CD14-positive monocyte (primary cell): ENCODE measurements at regions of chr2 and their contacts with region 1.

Region 1: GRCh38 chr2:99818842-99819241 is 323.5 kb downstream of the AFF3 start:
- DNase-seq: no peak
- H3K4me3 ChIP-seq: no peak overlapping the region
- H3K4me3 Mint-ChIP-seq: no peak overlapping the region
- H3K27ac ChIP-seq: no peak overlapping the region
- H3K27ac Mint-ChIP-seq: no peak overlapping the region
- H3K4me1 ChIP-seq: peaks cover 0 to 5% of the 10 kb centered on the region in 2 donors
- H3K4me1 Mint-ChIP-seq: peaks cover 16% of the 10 kb centered on the region
- H3K27me3 ChIP-seq: no peaks in the 10 kb centered on the region
- H3K27me3 Mint-ChIP-seq: no peaks in the 10 kb centered on the region
- CTCF ChIP-seq: no peak

Region 2: GRCh38 chr2:99644419-99644787 is 174.4 kb before region 1 on chr2:
- intact Hi-C with region 1: no loop called
- DNase-seq: no peak
- H3K4me3 ChIP-seq: no peak overlapping the region
- H3K4me3 Mint-ChIP-seq: no peak overlapping the region
- H3K27ac ChIP-seq: no peak overlapping the region
- H3K27ac Mint-ChIP-seq: no peak overlapping the region
- H3K4me1 ChIP-seq: no peaks in the 10 kb centered on the region
- H3K4me1 Mint-ChIP-seq: peaks cover 8% of the 10 kb centered on the region
- H3K27me3 ChIP-seq: no peaks in the 10 kb centered on the region
- H3K27me3 Mint-ChIP-seq: no peaks in the 10 kb centered on the region
- CTCF ChIP-seq: no peak

Region 3: DNA sequence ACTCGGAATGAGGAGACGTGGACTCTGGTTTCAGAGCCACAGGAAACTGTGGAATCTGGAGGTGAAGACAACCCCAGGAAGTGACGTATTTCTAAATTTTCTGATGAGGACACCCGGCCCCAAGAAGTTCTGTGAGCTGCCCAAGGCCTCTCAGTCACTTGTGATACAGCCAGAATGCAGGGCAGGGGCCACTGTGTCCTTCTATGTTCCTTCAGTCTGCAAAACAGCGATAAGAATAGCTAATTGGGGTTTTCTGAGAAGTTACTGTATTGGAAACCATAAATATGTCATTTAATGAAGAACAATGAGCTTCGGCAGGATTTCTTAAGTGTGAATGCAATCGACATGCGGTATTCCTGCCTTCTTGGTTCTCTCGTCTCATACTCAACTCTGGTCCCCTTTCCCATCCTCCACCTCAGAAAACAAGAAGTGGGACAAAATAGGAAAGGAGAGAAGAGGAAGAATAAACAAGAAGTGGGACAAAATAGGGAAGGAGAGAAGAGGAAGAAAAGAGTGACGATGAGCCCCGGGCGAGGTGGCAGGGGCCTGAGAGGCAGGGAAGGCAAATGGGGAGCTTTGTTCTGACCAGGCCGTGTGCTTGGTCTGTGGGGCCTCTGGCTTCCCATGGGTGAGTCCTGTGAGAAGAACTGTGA is 47.0 kb before region 1 on chr2:
- intact Hi-C with region 1: loop called in 1 of 2 experiments (anchors 5 kb)
- DNase-seq: peak; percentile 69 to 86 (median 84)
- H3K4me3 ChIP-seq: peak overlapping the region in 1 of 3 experiments; percentile 50
- H3K4me3 Mint-ChIP-seq: peak overlapping the region; percentile 42 to 69
- H3K27ac ChIP-seq: peak overlapping the region; percentile 83 to 92
- H3K27ac Mint-ChIP-seq: peak overlapping the region; percentile 95 to 98 (median 96)
- H3K4me1 ChIP-seq: peaks cover 81 to 88% of the 10 kb centered on the region in 2 donors
- H3K4me1 Mint-ChIP-seq: peaks cover 93% of the 10 kb centered on the region
- H3K27me3 ChIP-seq: no peaks in the 10 kb centered on the region
- H3K27me3 Mint-ChIP-seq: no peaks in the 10 kb centered on the region
- CTCF ChIP-seq: no peak

Region 4: DNA sequence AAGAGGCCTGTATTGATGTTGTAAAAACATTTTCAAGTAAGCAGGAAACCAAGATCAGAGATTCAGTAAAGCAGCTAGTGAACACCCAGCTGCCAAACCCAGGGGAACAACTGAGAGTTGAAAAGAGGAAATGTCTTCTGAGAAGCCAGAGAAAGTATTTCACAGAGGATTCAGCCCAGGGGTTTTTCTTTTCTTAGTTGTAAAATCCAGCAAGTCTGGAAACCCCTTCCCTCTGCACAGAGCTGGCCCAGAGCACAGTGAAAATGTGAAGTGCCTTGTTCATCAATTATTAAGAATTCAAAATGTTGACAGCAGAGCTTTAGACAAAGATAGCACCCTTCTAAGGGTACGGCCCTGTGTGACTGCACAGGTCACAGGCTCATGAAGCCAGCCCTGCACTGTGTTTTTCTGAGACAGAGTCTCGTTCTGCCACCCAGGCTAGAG is 295.2 kb after region 1 on chr2:
- intact Hi-C with region 1: no loop called
- DNase-seq: peak in 2 of 3 donors; percentile 8 to 23
- H3K4me3 ChIP-seq: no peak overlapping the region
- H3K4me3 Mint-ChIP-seq: peak overlapping the region in 1 of 2 donors; percentile 63
- H3K27ac ChIP-seq: peak overlapping the region; percentile 7 to 39
- H3K27ac Mint-ChIP-seq: peak overlapping the region in 3 of 7 donors; percentile 23 to 76 (median 69)
- H3K4me1 ChIP-seq: peaks cover 21 to 27% of the 10 kb centered on the region in 2 donors
- H3K4me1 Mint-ChIP-seq: peaks cover 35% of the 10 kb centered on the region
- H3K27me3 ChIP-seq: no peaks in the 10 kb centered on the region
- H3K27me3 Mint-ChIP-seq: peaks cover 0 to 1% (median 0%) of the 10 kb centered on the region in 3 donors
- CTCF ChIP-seq: no peak